ENCODE measurements at regions of chr2 and their contacts with region 1.

Region 1: GRCh38 chr2:176814306-176815052 is 398.1 kb upstream of the HNRNPA3 start:
- DNase-seq: peak; percentile 26
- ATAC-seq: peak; percentile 66
- H3K4me3 ChIP-seq: no peak overlapping the region
- H3K27ac ChIP-seq: no peak overlapping the region
- H3K4me1 ChIP-seq: no peaks in the 10 kb centered on the region
- H3K27me3 ChIP-seq: no peaks in the 10 kb centered on the region; the same call in 1 of the 2 replicates
- CTCF ChIP-seq: peak; percentile 52
- POLR2A ChIP-seq: no peak
- RAD21 ChIP-seq: peak; percentile 34

Region 2: DNA sequence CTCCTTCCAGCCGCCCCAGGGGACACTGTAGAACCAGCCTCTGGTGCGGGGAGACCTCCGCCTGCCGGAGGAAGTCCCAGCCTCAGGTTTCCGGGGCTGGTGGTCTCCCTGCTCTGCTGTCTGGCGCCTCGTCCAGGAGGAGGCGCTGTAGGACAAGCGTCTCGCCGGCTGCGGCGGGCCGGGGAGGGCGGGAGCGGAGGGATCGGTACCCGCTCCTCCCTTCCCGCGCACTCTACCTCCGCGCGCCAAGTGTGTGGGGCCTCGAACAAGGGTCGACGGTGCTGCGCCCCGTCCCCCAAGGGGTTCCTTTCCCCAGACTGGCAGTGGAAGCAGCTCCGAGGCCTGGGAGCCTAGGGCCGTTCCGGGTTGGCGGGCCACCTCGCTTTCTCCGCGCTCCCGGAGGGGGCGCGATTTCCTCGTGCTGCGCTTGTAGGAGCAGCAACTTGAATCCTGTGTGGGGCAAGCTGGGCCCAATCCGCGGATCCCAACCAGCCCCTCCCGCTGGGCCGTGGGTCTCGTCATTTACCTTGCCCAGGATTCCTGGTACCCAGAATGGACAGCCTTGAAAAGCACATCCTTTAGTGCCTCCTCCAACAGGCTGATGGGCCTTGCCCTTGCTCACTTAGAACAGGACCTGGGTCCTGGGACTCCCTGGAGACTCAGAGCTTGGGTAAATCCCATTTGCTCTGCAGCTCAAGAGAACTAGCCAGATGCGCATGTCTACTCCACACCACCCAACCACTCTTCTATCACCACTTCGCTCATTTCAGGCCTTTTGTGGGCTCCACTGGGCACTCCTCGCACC is 673.8 kb before region 1 on chr2:
- CTCF ChIA-PET with region 1: interaction called, 4 read pairs
- POLR2A ChIA-PET with region 1: no interaction called
- dilution Hi-C with region 1: no loop called
- in situ Hi-C with region 1: no loop called
- intact Hi-C with region 1: loop called (anchors 2 kb)
- DNase-seq: peak; percentile 46
- ATAC-seq: peak; percentile 95
- H3K4me3 ChIP-seq: peak overlapping the region; percentile 50
- H3K27ac ChIP-seq: no peak overlapping the region
- H3K4me1 ChIP-seq: no peaks in the 10 kb centered on the region
- H3K27me3 ChIP-seq: peaks cover 74% of the 10 kb centered on the region
- CTCF ChIP-seq: peak; percentile 82
- POLR2A ChIP-seq: no peak
- RAD21 ChIP-seq: peak; percentile 93

Region 3: GRCh38 chr2:176325732-176326131 is 488.7 kb before region 1 on chr2:
- CTCF ChIA-PET with region 1: no interaction called
- POLR2A ChIA-PET with region 1: no interaction called
- dilution Hi-C with region 1: no loop called
- in situ Hi-C with region 1: no loop called
- intact Hi-C with region 1: no loop called
- DNase-seq: no peak
- ATAC-seq: no peak
- H3K4me3 ChIP-seq: no peak overlapping the region
- H3K27ac ChIP-seq: no peak overlapping the region
- H3K4me1 ChIP-seq: no peaks in the 10 kb centered on the region
- H3K27me3 ChIP-seq: no peaks in the 10 kb centered on the region
- CTCF ChIP-seq: no peak
- POLR2A ChIP-seq: no peak
- RAD21 ChIP-seq: no peak

Region 4: DNA sequence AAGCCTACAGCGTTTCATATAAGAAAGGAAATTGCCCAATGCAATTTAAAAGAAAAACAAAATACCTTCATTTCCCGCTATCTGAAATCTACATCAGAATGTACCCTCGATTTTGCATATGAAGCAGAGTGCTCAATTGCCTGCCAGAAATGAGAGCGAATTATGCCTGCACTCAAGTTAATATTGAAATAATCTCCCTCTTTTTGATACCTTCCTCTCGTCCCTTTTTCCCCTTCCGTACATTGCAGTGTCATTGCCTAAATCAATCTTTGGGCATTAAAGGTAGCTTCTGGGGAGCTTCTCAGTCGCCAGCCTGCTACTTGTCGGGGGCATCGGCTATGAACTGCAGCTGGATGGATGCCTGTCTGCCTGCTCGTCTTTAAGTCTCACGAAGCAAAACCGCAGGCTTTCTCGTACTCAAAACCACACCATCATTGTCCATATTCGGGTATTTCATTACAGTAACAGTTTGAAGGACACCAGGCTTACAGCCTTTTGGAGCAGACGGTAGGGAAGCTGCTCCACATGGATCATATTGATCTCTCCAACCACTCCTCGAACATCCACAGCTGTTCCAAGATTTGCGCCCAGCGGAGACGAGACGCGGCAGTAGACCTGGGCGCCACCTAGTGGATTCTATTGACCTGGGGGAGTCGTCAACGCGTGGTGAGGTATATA is 334.1 kb after region 1 on chr2:
- CTCF ChIA-PET with region 1: interaction called, 3 read pairs
- POLR2A ChIA-PET with region 1: no interaction called
- dilution Hi-C with region 1: no loop called
- in situ Hi-C with region 1: no loop called
- intact Hi-C with region 1: loop called (anchors 1 kb)
- DNase-seq: peak; percentile 66
- ATAC-seq: peak; percentile 99
- H3K4me3 ChIP-seq: peak overlapping the region; percentile 71
- H3K27ac ChIP-seq: no peak overlapping the region
- H3K4me1 ChIP-seq: no peaks in the 10 kb centered on the region
- H3K27me3 ChIP-seq: peaks cover 19% of the 10 kb centered on the region
- CTCF ChIP-seq: peak; percentile 80
- POLR2A ChIP-seq: no peak
- RAD21 ChIP-seq: peak; percentile 43